Ovary (tissue), 10 donors: ENCODE measurements at regions of chr9 and their contacts with region 1.

Region 1: DNA sequence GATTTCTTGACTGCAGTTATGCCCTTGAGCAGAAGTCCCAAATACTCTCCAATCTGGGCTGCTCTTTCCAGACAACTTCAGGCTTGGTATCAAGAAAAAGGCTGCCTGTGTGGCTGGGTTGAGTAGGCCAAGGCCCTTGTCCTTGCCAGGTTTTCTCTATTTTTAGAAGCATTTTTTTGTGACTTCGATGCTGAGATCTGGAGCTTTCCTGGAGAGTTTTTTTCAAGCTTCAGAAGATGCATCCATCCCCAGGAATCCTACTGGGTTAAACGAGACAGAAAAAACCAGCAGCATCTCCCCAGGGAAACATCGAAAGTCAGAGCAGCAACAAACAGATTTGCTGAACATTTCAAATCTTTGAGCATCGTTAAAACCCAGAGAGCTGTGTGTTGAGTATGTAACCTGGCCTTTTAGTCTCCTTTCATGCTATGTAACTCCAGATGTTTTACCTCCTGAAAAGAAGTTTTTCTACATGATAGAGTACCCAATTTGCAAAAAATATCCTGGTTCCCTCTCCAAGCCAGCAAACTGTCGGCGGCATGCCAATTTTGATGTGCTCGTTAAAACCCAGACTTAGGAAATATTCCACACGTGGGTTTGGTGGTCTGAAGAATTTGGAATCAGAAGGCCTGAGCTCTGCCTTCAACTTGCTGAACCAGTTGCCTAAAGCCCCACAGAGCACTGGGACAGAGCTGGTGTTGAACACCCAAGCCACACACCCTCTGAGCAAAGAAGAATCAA is 98.1 kb upstream of the ALDH1B1 start:
- DNase-seq: peak in 4 of 5 donors; percentile 27 to 51 (median 42)
- H3K4me3 ChIP-seq: no peak overlapping the region
- H3K27ac ChIP-seq: peak overlapping the region in 1 of 2 donors; percentile 9
- H3K4me1 ChIP-seq: peaks cover 1% of the 10 kb centered on the region
- H3K27me3 ChIP-seq: no peaks in the 10 kb centered on the region
- CTCF ChIP-seq: no peak
- EP300 ChIP-seq: no peak
- POLR2A ChIP-seq: no peak

Region 2: DNA sequence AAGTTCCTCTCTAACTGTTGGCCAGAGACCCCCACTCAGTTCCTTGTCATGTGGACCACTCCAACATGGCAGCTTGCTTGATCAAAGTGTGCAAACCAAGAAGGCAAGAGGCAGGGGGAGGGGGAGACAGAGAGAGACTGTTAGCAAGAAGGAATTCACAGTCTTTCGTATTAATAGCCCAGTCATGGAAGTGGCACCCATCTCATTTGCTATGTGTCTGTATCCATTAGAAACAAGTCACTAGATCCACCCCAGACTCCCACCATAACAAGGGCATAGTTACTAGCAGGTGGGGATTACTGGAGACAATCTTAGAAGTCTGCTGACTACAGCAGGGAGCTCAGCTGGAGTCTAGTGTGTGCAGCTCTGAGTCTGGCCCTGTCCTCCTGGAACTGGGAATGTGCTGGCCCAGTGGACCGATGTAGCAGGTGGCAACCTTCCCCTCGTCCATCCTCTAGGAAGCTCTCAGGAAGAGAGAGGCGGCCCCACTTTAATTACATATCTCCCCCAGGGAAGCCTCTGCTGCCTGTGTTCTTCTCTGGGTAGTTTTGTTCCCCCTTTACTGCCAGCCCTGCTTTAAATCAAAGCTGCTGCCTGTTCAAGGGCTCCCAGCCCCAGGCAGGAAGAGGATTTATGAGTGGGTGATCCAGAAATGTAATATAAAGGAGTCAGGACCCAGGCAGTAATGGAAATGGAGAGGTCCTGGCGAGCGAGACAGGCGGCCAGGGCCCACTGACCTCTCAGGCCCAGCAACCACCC is 50.4 kb after region 1 on chr9:
- intact Hi-C with region 1: loop called in 1 of 4 experiments (anchors 5 kb)
- DNase-seq: no peak
- H3K4me3 ChIP-seq: no peak overlapping the region
- H3K27ac ChIP-seq: no peak overlapping the region
- H3K4me1 ChIP-seq: no peaks in the 10 kb centered on the region
- H3K27me3 ChIP-seq: no peaks in the 10 kb centered on the region
- CTCF ChIP-seq: no peak
- EP300 ChIP-seq: no peak
- POLR2A ChIP-seq: no peak